ENCODE measurements at regions of chr4 and their contacts with region 1.

Region 1: GRCh38 chr4:30714408-30715027 is 5.7 kb upstream of the PCDH7 start:
- DNase-seq: peak; percentile 67 to 73
- H3K4me3 ChIP-seq: no peak overlapping the region
- H3K4me3 Mint-ChIP-seq: no peak overlapping the region
- H3K27ac Mint-ChIP-seq: no peak overlapping the region
- H3K4me1 ChIP-seq: peaks cover 6% of the 10 kb centered on the region; the same call in 1 of the 2 replicates
- H3K4me1 Mint-ChIP-seq: no peaks in the 10 kb centered on the region
- H3K27me3 ChIP-seq: no peaks in the 10 kb centered on the region
- H3K27me3 Mint-ChIP-seq: no peaks in the 10 kb centered on the region
- CTCF ChIP-seq: peak; percentile 77 to 80

Region 2: DNA sequence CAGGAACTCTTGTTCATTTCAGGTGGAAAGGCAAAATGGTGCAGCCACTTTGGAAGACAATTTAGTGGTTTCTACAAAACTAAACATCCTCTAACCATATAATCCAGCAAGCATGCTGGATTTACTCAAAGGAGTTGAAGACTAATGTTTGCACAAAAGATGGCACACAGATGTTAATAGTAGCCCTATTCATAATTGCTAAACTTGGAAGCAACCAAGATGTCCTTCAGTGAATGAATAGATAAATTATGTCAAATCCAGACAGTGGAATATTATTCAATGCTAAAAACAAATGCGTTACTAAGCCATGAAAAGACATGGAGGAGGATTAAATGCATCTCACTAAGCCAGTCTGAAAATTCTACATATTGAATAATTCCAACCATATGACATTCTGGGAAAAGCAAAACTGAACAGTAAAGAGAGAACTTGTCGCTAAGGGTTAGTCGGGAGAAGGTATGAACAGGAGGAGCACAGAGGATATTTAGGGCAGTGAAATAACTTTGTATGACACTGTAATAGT is 42.5 kb before region 1 on chr4:
- CTCF ChIA-PET with region 1: no interaction called
- POLR2A ChIA-PET with region 1: no interaction called
- intact Hi-C with region 1: no loop called
- DNase-seq: no peak
- H3K4me3 ChIP-seq: no peak overlapping the region
- H3K4me3 Mint-ChIP-seq: no peak overlapping the region
- H3K27ac Mint-ChIP-seq: no peak overlapping the region
- H3K4me1 ChIP-seq: no peaks in the 10 kb centered on the region
- H3K4me1 Mint-ChIP-seq: no peaks in the 10 kb centered on the region
- H3K27me3 ChIP-seq: no peaks in the 10 kb centered on the region
- H3K27me3 Mint-ChIP-seq: no peaks in the 10 kb centered on the region
- CTCF ChIP-seq: no peak

Region 3: DNA sequence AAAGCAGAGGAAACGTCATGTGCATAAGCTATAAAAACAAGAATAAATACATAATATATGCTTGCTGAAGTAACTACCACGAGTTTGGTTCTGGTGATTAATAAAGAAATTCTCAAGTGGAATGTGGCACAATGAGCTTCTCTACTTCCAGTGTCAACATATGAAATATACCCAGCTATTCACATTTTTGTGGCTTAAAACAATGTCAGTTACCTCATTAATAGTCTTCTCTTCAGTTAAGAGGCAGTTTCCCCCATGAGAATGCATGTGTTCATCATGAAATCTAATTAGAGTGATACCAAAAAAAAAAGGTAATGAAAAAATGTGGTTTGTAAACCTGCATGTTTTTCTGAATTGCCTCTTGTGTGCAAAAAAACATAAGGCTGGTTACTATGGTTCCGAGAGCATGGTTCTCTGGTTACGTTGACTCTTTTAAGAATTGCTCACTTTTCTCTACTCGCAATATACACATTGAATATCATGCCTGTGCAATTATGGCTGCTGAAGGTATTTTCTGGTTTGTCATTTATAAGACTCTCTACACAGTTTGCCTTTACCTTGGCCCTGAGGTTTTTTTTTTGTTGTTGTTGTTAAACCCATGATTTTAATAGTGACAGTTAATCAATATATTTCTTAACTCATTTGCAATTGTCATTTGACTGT is 113.9 kb after region 1 on chr4:
- CTCF ChIA-PET with region 1: no interaction called
- POLR2A ChIA-PET with region 1: no interaction called
- intact Hi-C with region 1: no loop called
- DNase-seq: no peak
- H3K4me3 ChIP-seq: no peak overlapping the region
- H3K4me3 Mint-ChIP-seq: no peak overlapping the region
- H3K27ac Mint-ChIP-seq: no peak overlapping the region
- H3K4me1 ChIP-seq: no peaks in the 10 kb centered on the region
- H3K4me1 Mint-ChIP-seq: peaks cover 5% of the 10 kb centered on the region
- H3K27me3 ChIP-seq: no peaks in the 10 kb centered on the region
- H3K27me3 Mint-ChIP-seq: no peaks in the 10 kb centered on the region
- CTCF ChIP-seq: no peak

Region 4: DNA sequence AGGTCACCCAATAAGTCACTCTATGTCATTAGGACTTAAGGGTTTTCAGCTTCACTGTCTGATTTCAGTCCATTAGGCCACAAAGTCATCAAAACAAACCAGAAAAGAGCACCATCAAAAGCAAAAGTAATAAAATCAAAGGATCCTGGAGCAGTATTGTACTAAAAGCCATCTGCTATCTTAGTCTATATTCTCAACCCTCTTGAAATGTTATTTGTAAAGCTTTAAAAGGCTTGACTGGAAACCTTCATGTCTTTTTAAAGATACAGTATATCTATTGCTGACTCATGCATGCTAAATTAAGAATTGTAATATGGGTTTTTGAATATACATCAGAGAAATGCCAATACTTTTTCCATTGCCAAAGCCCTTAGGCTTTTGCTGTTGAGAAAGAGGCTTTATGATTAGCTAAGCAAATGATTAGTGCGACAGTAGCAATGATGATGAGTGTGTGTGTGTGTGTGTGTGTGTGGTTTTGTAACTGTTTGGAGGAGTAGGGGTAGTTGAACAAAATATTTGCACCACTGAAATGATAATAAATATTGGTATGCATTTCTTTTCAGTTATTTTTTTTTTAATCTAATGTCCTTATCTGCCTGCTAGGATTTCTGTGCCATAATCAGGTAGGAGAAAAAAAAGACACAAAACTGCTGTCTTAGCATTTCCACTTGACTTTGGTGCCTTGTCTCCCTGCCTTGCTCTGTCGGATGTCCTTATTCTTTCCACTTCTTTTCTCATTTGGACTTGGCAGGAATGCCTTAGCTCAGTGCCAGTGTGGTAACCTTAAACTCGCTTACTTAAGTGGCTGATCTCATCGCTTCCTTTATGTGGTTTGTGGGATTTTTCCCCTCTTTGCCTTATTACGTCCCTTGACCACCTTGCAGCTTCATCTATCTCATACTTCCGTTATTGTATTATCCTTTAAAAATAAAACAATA is 125.3 kb after region 1 on chr4:
- CTCF ChIA-PET with region 1: no interaction called
- POLR2A ChIA-PET with region 1: no interaction called
- intact Hi-C with region 1: loop called (anchors 1 kb)
- DNase-seq: no peak
- H3K4me3 ChIP-seq: no peak overlapping the region
- H3K4me3 Mint-ChIP-seq: no peak overlapping the region
- H3K27ac Mint-ChIP-seq: no peak overlapping the region
- H3K4me1 ChIP-seq: peaks cover 58% of the 10 kb centered on the region
- H3K4me1 Mint-ChIP-seq: peaks cover 40% of the 10 kb centered on the region
- H3K27me3 ChIP-seq: no peaks in the 10 kb centered on the region
- H3K27me3 Mint-ChIP-seq: no peaks in the 10 kb centered on the region
- CTCF ChIP-seq: no peak

Region 5: DNA sequence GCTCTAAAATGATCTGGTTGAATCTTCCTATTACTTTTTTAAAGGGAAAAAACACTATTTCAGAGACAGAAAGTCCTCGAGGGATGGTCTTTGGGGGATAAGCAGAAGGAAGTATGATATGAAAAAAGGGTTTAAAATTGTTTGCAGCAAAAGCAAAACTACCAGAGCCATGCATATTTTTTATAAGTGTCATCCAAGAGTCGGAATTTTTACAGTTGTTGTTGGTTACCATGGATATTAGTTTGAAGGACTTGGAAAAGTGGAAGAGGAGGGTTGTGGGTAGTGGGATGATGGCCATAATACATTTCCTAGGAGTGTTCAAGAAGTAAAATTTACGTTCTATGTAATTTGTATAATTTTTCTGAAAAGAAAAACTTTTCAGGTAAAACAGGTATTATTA is 140.0 kb after region 1 on chr4:
- CTCF ChIA-PET with region 1: no interaction called
- POLR2A ChIA-PET with region 1: no interaction called
- intact Hi-C with region 1: no loop called
- DNase-seq: no peak
- H3K4me3 ChIP-seq: no peak overlapping the region
- H3K4me3 Mint-ChIP-seq: no peak overlapping the region
- H3K27ac Mint-ChIP-seq: no peak overlapping the region
- H3K4me1 ChIP-seq: no peaks in the 10 kb centered on the region
- H3K4me1 Mint-ChIP-seq: no peaks in the 10 kb centered on the region
- H3K27me3 ChIP-seq: no peaks in the 10 kb centered on the region
- H3K27me3 Mint-ChIP-seq: no peaks in the 10 kb centered on the region
- CTCF ChIP-seq: no peak

Region 6: DNA sequence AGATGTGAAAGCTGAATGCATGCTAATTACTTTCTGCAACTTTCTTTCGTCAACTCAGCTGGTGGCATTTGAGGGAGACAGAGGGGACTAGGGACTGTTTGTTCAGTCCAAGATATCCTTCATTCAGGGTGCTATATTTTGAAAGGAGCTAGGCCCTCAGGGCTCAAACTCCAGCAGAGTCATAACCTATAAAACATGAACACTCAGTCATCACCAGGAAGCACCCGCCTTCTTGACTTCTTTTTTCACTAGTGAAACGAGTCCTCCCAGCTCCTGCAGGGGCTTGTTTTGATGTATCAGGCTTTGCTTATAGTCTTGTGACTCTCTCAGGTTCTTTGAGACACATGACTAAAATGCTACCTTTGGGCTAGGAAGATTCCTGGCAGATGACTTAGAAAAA is 236.2 kb after region 1 on chr4:
- CTCF ChIA-PET with region 1: no interaction called
- POLR2A ChIA-PET with region 1: no interaction called
- intact Hi-C with region 1: loop called (anchors 2 kb)
- DNase-seq: peak; percentile 25 to 71
- H3K4me3 ChIP-seq: no peak overlapping the region
- H3K4me3 Mint-ChIP-seq: no peak overlapping the region
- H3K27ac Mint-ChIP-seq: peak overlapping the region; percentile 33
- H3K4me1 ChIP-seq: peaks cover 58% of the 10 kb centered on the region
- H3K4me1 Mint-ChIP-seq: peaks cover 39% of the 10 kb centered on the region
- H3K27me3 ChIP-seq: no peaks in the 10 kb centered on the region
- H3K27me3 Mint-ChIP-seq: no peaks in the 10 kb centered on the region
- CTCF ChIP-seq: no peak

Region 7: GRCh38 chr4:31016322-31017061 is 302.0 kb after region 1 on chr4:
- CTCF ChIA-PET with region 1: no interaction called
- POLR2A ChIA-PET with region 1: no interaction called
- intact Hi-C with region 1: no loop called
- DNase-seq: no peak
- H3K4me3 ChIP-seq: no peak overlapping the region
- H3K4me3 Mint-ChIP-seq: no peak overlapping the region
- H3K27ac Mint-ChIP-seq: no peak overlapping the region
- H3K4me1 ChIP-seq: peaks cover 8% of the 10 kb centered on the region
- H3K4me1 Mint-ChIP-seq: peaks cover 19% of the 10 kb centered on the region
- H3K27me3 ChIP-seq: no peaks in the 10 kb centered on the region
- H3K27me3 Mint-ChIP-seq: no peaks in the 10 kb centered on the region
- CTCF ChIP-seq: no peak

Region 8: DNA sequence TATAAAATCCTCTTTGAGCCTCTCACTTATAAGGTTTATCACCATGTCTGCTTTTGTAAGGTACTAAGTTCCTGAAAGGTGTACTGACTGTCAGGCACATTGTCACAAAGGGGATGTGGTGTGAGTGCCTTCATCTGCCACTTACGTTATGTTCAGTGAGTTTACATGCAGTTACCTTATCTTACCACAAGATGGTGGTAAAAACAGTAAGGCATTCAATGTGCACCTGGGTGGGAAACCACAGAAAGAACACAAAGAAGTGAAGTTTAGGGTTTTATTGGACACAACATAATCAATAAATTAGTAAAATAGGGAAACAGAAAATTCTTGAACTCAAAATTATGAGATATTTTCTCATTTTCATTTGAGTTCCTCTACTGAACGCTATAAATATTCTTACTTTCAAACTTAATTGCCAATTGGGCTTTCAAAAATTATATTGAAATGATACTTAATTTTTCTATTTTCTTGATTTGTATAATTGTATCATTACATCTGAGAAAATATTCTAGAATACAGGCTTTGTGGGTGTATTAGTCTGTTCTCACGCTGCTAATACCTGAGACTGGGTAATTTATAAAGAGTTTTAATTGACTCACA is 656.4 kb after region 1 on chr4:
- CTCF ChIA-PET with region 1: no interaction called
- POLR2A ChIA-PET with region 1: no interaction called
- intact Hi-C with region 1: loop called (anchors 2 kb)
- DNase-seq: peak in 1 of 2 experiments; percentile 58
- H3K4me3 ChIP-seq: no peak overlapping the region
- H3K4me3 Mint-ChIP-seq: no peak overlapping the region
- H3K27ac Mint-ChIP-seq: no peak overlapping the region
- H3K4me1 ChIP-seq: 0 out of 2 replicates have a peak, but pooled peaks cover 1% of the 10 kb centered on the region
- H3K4me1 Mint-ChIP-seq: peaks cover 2% of the 10 kb centered on the region
- H3K27me3 ChIP-seq: no peaks in the 10 kb centered on the region
- H3K27me3 Mint-ChIP-seq: no peaks in the 10 kb centered on the region
- CTCF ChIP-seq: peak; percentile 56 to 73

Region 9: DNA sequence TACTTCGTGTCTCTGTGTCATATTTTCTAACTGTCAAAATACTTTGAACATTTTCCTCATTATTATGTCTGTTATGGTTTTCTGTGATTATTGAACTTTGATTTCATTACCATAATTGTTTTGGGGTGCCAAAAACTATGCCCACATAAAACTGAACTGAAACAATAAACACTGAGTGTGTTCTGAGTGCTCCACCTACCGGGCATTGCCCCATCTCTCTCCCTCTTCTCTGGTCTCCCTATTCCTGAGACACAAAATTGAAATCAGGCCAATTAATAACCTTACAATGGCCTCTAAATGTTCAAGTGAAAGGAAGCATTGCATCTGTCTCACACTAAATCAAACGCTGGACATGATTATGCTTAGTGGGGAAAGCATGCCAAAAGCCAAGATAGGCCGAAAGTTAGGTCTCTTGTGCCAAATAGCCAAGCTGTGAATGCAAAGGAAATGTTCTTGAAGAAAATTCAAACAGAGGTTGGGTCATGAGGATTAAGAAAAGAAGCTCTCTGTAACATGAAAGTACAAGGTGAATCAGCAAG is 978.0 kb after region 1 on chr4:
- CTCF ChIA-PET with region 1: no interaction called
- POLR2A ChIA-PET with region 1: no interaction called
- intact Hi-C with region 1: loop called (anchors 5 kb)
- DNase-seq: no peak
- H3K4me3 ChIP-seq: no peak overlapping the region
- H3K4me3 Mint-ChIP-seq: no peak overlapping the region
- H3K27ac Mint-ChIP-seq: no peak overlapping the region
- H3K4me1 ChIP-seq: no peaks in the 10 kb centered on the region
- H3K4me1 Mint-ChIP-seq: no peaks in the 10 kb centered on the region
- H3K27me3 ChIP-seq: no peaks in the 10 kb centered on the region
- H3K27me3 Mint-ChIP-seq: peaks cover 2% of the 10 kb centered on the region
- CTCF ChIP-seq: peak in 1 of 2 experiments; percentile 41